ENCODE measurements at regions of chr20 and their contacts with region 1.

Region 1: GRCh38 chr20:20360464-20360863 is 7.4 kb upstream of the INSM1 start:
- DNase-seq: peak; percentile 64
- CTCF ChIP-seq: peak; percentile 60

Region 2: DNA sequence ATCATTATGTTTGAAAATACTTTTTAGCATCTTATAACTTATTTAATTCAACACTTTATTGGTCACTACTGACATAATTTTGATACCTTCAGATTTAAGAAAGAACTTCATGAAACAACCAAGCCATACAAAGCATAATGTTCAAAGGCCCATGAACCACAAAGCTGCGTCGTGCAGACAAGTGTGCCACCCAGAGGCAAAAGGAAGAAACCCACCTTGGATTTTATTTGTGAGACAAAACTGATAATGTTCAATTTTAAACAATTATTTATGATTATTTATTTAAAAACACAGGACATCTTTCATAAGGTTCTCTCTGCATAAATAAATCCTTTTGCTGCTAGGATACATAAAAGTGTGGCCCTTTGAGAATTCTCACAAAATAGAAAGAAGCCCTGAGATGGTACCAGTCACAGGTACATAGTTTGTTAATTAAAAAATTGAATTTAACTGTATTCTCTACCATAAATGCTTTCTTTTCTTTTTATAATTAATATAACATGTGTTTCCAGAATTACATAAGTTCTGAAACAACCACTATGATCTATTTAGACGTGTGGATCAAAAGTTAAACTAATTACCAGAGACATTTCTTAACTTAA is 208.2 kb after region 1 on chr20:
- in situ Hi-C with region 1: loop called (anchors 10 kb)
- DNase-seq: peak; percentile 37
- CTCF ChIP-seq: peak; percentile 53

Measured in GM13976 (cell line).